ENCODE measurements at regions of chr4 and their contacts with region 1.

Region 1: DNA sequence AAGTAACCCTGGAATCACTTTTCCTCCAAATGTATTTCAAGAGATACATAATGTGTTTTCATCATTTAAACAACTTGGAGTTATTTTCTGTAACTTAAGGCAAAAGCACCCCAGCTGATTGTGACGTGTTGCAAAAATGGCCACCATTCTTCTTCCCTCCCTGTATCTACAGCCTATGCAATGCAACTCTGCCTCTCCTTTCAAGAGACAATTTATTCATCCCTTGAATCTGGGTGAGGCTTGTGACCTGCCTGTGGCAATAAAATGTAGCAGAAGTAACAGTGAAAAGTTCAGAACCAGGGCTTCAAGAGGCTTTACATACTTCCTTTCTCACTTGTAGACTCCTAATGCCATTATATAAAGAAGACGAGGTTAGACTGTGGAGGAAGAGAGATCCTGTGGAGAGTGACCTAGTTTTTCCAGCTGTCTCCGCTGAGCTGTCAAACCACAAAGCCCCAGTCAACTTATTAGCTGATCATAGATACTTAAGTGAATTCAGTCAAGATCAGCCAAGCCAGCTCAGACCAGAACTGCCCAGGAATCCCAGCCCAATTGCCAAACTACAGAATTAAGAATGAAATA is 81.0 kb upstream of the KLF3 start:
- DNase-seq: peak in 1 of 3 donors; percentile 6
- H3K4me3 ChIP-seq: no peak overlapping the region
- H3K4me3 Mint-ChIP-seq: no peak overlapping the region
- H3K27ac ChIP-seq: no peak overlapping the region
- H3K27ac Mint-ChIP-seq: peak overlapping the region in 6 of 7 donors; percentile 4 to 75 (median 55)
- H3K4me1 ChIP-seq: peaks cover 34 to 43% of the 10 kb centered on the region in 2 donors
- H3K4me1 Mint-ChIP-seq: peaks cover 50% of the 10 kb centered on the region
- H3K27me3 ChIP-seq: no peaks in the 10 kb centered on the region
- H3K27me3 Mint-ChIP-seq: peaks cover 0 to 7% (median 0%) of the 10 kb centered on the region in 3 donors
- CTCF ChIP-seq: no peak

Region 2: GRCh38 chr4:38535717-38536116 is 47.3 kb before region 1 on chr4:
- intact Hi-C with region 1: no loop called
- DNase-seq: no peak
- H3K4me3 ChIP-seq: no peak overlapping the region
- H3K4me3 Mint-ChIP-seq: no peak overlapping the region
- H3K27ac ChIP-seq: no peak overlapping the region
- H3K27ac Mint-ChIP-seq: no peak overlapping the region
- H3K4me1 ChIP-seq: peaks cover 25 to 35% of the 10 kb centered on the region in 2 donors
- H3K4me1 Mint-ChIP-seq: peaks cover 34% of the 10 kb centered on the region
- H3K27me3 ChIP-seq: no peaks in the 10 kb centered on the region
- H3K27me3 Mint-ChIP-seq: peaks cover 0 to 11% (median 0%) of the 10 kb centered on the region in 3 donors
- CTCF ChIP-seq: no peak

Region 3: DNA sequence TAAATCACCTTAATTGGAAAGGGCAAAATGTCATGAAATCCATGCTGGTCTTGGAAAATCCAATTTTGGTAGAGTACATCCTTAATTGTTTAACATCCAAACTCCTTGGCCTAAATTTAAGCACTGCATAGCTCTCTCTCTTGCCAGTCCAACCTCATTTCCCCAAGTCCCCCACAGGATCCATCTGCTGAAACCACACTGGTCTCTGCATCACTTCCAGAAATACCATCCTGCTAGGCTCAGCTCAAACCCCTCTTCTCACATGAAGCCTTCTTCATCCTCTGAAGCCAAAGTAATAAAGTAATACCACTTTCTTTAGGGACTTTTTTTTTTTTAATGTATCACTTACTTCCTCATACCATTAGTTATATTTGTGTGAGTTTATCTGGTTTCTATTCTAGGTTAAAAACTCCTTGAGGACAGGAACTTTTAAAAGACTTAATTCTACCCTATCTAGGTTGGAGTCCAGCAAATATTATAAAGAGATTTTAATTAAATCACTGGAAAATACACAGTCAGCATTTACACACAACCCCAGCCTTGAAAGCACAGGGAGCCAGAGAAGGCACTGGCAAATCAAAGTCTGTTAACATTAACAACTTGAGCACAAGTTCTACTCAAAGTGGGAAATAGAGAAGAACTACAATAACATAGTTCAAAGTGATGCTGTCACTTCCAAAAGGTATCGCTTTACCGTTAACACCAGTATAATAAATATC is 64.3 kb after region 1 on chr4:
- intact Hi-C with region 1: loop called in 1 of 2 experiments (anchors 10 kb)
- DNase-seq: no peak
- H3K4me3 ChIP-seq: no peak overlapping the region
- H3K4me3 Mint-ChIP-seq: no peak overlapping the region
- H3K27ac ChIP-seq: no peak overlapping the region
- H3K27ac Mint-ChIP-seq: peak overlapping the region in 2 of 7 donors; percentile 18 to 64
- H3K4me1 ChIP-seq: peaks cover 5 to 9% of the 10 kb centered on the region in 2 donors
- H3K4me1 Mint-ChIP-seq: peaks cover 13% of the 10 kb centered on the region
- H3K27me3 ChIP-seq: no peaks in the 10 kb centered on the region
- H3K27me3 Mint-ChIP-seq: peaks cover 2 to 6% (median 2%) of the 10 kb centered on the region in 3 donors
- CTCF ChIP-seq: no peak

Region 4: DNA sequence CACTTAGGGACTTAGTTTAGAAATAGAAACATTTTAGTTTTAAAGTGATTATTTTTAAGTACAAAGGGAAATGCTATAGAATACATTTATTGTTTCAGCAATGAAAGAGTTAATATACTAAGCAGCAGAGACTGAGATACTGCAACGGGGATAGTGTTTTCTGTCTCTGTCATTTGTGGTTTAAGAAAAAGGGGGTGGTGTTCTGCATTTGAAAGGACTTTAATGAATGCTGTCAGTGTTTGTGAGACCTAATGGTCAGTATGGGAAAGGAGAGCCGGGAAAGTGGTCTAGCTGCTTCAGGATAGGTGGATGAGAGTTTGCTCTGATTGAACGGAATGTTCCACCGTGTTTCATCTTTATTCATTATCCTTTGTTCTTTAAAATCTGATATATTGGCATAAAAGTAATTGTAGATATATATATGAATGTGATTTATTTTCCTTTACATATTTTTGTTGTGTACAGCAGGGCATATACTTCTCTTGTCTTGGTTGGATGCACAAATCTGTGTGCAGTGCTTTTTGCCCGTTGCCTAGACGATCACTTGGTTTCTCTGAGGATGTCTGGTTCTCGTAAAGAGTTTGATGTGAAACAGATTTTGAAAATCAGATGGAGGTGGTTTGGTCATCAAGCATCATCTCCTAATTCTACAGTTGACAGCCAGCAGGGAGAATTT is 479.3 kb after region 1 on chr4 and contains the start of gene KLHL5:
- intact Hi-C with region 1: no loop called
- DNase-seq: no peak
- H3K4me3 ChIP-seq: no peak within 1 kb of the TSS
- H3K4me3 Mint-ChIP-seq: no peak within 1 kb of the TSS
- H3K27ac ChIP-seq: no peak within 1 kb of the TSS
- H3K27ac Mint-ChIP-seq: peak within 1 kb of the TSS in 1 of 7 donors; percentile 7
- H3K4me1 ChIP-seq: no peaks in the 10 kb centered on the region
- H3K4me1 Mint-ChIP-seq: peaks cover 2% of the 10 kb centered on the region
- H3K27me3 ChIP-seq: no peaks in the 10 kb centered on the region
- H3K27me3 Mint-ChIP-seq: no peaks in the 10 kb centered on the region
- CTCF ChIP-seq: no peak
- polyA plus RNA-seq, gene KLHL5: 16.7 to 32.2 (median 23.3) TPM